Activated CD8-positive, alpha-beta memory T cell treated with anti-CD3 and anti-CD28 coated beads, Interleukin-2, amount 10 ng/mL, durations not matched to agents 7 days and 5 days (primary cell): ENCODE measurements at regions of chr17 and their contacts with region 1.

Region 1: DNA sequence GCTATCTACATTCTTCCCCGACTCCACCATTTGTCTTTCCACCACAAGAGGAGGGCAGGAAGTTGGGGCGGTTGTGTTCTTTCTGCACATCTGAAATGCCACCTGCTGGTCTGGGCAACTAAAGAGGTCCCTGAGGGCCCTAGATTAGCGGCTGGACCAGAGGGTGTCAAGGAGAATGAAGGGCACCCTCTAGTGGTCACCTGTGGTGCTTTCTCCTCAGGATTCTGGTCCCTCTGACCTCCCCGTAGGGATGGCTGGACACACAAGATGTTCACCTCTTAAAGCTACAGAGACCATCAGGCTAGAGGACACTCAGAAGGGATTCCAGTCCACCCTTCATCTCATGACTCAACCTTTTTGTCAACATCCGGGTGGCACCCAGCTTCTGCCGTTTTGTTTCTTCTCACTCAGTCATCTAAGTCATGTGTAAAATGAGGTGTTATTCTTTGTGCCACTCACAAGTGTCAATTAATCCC is 2.9 kb upstream of the SCIMP start:
- DNase-seq: peak; percentile 75
- ATAC-seq: peak; percentile 88
- H3K4me3 Mint-ChIP-seq: no peak overlapping the region
- H3K27ac Mint-ChIP-seq: peak overlapping the region; percentile 28
- H3K4me1 Mint-ChIP-seq: peaks cover 20% of the 10 kb centered on the region
- H3K27me3 Mint-ChIP-seq: no peaks in the 10 kb centered on the region

Region 2: DNA sequence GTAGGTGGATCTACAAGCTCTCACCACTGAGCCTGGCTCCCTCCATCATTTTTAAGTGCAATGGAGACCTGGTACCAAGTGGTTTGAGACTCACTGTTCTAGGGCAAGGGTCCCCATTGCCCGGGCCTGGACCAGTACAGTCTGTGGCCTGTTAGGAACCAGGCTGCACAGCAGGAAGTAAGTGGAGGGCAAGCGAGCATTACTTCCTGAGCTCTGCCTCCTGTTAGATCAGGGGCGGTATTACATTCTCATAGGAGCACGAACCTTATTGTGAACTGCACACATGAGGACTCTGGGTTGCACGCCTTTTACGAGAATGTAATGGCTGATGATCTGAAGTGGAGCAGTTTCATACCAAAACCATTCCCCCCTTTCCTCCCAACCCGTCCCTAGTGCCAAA is 39.1 kb before region 1 on chr17:
- CTCF ChIA-PET with region 1: interaction called, 11 read pairs
- DNase-seq: no peak
- ATAC-seq: no peak
- H3K4me3 Mint-ChIP-seq: no peak overlapping the region
- H3K27ac Mint-ChIP-seq: no peak overlapping the region
- H3K4me1 Mint-ChIP-seq: no peaks in the 10 kb centered on the region
- H3K27me3 Mint-ChIP-seq: no peaks in the 10 kb centered on the region

Region 3: GRCh38 chr17:5226940-5227878 is 10.4 kb before region 1 on chr17:
- CTCF ChIA-PET with region 1: interaction called, 19 read pairs
- DNase-seq: peak; percentile 62
- ATAC-seq: peak; percentile 72
- H3K4me3 Mint-ChIP-seq: no peak overlapping the region
- H3K27ac Mint-ChIP-seq: peak overlapping the region; percentile 84
- H3K4me1 Mint-ChIP-seq: peaks cover 22% of the 10 kb centered on the region
- H3K27me3 Mint-ChIP-seq: no peaks in the 10 kb centered on the region